ENCODE measurements at regions of chr1 and their contacts with region 1.

Region 1: GRCh38 chr1:9101510-9102146 is 27.3 kb downstream of the GPR157 start:
- DNase-seq: no peak
- ATAC-seq: peak in 3 of 4 donors; percentile 70 to 86 (median 78)
- H3K4me3 ChIP-seq: no peak overlapping the region
- H3K27ac ChIP-seq: no peak overlapping the region
- H3K4me1 ChIP-seq: no peaks in the 10 kb centered on the region
- H3K27me3 ChIP-seq: no peaks in the 10 kb centered on the region
- CTCF ChIP-seq: peak in 3 of 4 donors; percentile 11 to 29 (median 25)

Region 2: DNA sequence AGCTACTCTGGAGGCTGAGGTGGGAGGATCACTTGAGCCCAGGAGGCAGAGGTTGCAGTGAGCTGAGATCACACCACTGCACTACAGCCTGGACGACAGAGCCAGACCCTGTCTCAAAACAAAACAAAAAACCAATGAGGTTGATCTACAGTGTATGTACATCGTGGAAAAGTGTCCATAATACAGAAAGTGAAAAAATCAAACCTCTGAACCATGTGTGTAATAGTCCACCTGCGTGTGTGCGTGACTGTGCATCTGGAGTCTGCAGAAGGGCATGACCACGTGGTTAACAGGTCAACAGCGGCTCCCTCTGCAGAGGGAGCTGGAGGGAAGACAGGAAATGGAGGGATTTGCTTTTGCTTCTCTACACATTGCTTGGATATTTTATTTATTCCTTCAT is 190.7 kb before region 1 on chr1:
- intact Hi-C with region 1: loop called in 1 of 3 experiments (anchors 10 kb)
- DNase-seq: no peak
- ATAC-seq: no peak
- H3K4me3 ChIP-seq: no peak overlapping the region
- H3K27ac ChIP-seq: no peak overlapping the region
- H3K4me1 ChIP-seq: no peaks in the 10 kb centered on the region
- H3K27me3 ChIP-seq: no peaks in the 10 kb centered on the region
- CTCF ChIP-seq: no peak

Measured in pancreas (tissue), 10 donors.